BJ (cell line): ENCODE measurements at regions of chr5 and their contacts with region 1.

Region 1: DNA sequence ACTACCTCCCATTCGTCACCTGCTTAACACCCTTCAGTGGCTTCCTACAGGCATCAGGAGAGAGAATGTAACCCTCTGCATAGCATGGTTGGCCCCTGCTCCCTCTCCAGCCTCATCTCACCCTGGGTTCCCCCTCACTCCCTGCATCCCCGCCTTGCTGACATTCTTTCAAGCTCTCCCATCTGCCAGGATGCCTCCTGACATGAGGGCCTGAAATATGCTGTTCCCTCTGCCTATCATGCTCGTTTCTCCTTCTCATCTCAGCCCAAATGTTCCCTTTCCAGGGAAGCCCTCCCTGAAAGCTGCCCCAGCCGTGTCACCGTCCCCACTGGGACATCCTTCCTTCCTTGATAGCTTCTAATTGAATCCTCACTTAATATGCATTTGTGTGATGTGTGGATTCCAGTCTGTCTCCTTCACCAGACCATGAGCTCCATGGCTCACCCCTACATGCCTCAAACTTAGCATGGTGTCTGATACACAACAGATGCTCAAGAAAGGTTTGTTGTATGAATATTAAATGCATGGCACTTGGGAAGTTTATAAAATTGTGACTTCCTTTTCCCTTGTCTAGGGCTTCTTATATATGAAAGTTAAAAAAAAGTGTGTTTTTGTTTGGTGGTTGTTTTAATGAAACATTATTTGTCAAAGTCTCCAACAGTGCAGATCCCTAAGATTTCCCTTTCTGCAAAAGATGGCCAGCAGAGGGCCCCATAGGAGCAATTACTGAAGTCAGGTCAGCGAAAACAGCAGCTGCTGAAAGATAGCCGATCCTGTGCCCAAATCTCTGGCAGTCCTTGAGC is 7.3 kb upstream of the C5orf58 start:
- DNase-seq: no peak
- H3K4me3 ChIP-seq: no peak overlapping the region
- H3K27me3 ChIP-seq: peaks cover 2% of the 10 kb centered on the region; the same call in 1 of the 2 replicates
- CTCF ChIP-seq: peak; percentile 77

Region 2: DNA sequence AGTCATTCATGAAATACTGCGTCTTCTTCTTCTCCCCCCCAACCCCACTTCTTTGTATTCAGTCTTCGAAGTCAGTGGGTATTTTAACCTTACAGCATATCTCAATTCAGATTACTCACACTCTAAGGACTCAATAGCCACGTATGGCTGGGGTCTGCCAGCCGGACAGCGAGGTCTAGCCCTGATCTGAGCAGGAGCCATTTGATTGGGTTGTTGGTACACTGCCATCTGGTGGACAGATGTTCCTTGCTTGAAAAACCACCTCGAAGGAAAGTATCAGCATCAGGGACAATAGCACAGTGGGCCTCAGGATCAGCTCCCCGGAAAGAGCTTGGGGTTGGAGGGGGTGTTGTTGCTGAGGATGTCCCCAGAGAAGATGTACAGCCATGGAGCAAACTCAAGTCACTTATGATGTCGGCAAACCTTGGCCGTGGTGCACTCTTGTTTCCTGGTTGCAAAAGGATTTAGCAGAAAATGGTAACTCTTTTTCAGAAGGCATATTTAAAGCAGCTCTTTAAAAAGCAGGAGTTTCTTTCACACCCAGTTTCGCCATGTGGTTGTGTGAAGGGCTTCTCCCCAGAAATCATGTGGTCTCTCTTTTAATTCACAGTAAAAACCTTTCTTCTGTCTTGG is 195.4 kb after region 1 on chr5:
- CTCF ChIA-PET with region 1: interaction called, 95 read pairs
- POLR2A ChIA-PET with region 1: no interaction called
- DNase-seq: no peak
- H3K4me3 ChIP-seq: no peak overlapping the region
- H3K27me3 ChIP-seq: 0 out of 2 replicates have a peak, but pooled peaks cover 3% of the 10 kb centered on the region
- CTCF ChIP-seq: peak; percentile 72